ENCODE measurements at regions of chr1 and their contacts with region 1.

Region 1: DNA sequence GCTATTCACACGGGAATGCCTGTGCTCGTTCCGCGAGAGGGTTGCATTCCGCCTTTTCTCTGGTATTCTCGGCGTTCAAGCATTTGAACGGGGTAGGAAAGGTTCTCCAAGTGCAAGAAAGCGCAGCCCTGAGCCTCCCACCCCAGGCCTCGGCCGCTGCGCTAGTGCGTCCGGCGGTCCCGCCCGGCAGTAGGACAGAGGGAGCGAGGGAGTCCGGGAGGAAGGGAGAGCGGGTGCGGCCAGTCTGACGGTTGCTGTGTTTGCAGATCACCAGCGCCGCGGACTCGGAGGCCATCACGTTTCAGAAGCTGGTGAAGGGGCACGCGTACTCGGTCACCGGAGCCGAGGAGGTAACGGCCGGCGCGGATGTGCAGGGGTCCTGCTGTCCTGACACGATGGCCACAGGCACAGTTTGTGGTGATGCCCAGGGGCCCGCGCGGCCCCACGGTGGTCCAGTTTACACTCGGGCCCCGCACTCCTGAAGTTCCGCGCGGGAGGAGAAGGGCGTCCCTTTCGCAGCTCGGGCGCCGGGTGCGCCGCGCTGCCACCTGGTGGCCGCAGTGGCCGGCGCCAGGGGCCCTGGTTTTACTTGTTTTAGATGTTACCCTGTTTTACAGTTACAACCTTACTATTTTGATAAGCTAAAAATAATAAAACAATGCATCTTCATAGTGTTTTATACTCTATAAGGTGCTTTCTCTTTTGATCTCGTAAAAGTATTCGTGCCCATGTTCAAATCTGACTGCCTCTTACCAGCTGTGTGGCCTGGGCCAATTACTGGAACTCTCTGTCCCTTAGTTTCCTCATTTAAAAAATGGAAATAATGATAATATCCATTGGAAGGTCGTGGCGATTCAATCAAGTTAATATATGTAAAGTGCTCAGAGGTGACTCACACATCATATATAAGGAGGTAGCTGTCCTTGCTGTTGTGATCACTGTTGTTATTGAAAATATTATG is 36.7 kb downstream of the CAPN2 start:
- DNase-seq: peak; percentile 62
- H3K4me3 ChIP-seq: peak overlapping the region in 1 of 3 experiments; percentile 15
- H3K27ac ChIP-seq: peak overlapping the region; percentile 10
- H3K4me1 ChIP-seq: peaks cover 24% of the 10 kb centered on the region
- H3K27me3 ChIP-seq: no peaks in the 10 kb centered on the region
- CTCF ChIP-seq: peak; percentile 89 to 93
- POLR2A ChIP-seq: no peak

Region 2: DNA sequence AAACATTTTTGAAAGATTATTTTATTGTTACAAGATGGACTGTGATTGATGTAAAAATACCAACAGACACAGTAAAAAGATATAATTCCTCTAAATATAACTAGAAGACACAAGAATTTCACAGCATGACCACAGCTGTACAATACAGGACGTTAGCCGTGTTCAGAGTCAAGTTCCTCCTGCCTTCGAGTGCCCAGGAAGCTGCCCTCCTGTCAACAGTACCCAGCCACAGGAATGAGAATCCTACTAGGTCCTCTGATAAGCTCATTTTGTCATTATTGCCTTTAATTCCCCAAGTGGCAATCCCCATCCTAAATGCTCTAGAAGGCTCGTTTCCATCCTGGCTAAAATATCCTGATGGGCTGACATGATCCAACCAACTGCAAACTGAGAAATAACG is 53.1 kb before region 1 on chr1:
- CTCF ChIA-PET with region 1: interaction called, 118 read pairs
- POLR2A ChIA-PET with region 1: interaction called, 3 read pairs
- dilution Hi-C with region 1: no loop called
- intact Hi-C with region 1: loop called (anchors 1 kb)
- DNase-seq: no peak
- H3K4me3 ChIP-seq: no peak overlapping the region
- H3K27ac ChIP-seq: no peak overlapping the region
- H3K4me1 ChIP-seq: peaks cover 10% of the 10 kb centered on the region
- H3K27me3 ChIP-seq: no peaks in the 10 kb centered on the region
- CTCF ChIP-seq: no peak
- POLR2A ChIP-seq: no peak

Region 3: DNA sequence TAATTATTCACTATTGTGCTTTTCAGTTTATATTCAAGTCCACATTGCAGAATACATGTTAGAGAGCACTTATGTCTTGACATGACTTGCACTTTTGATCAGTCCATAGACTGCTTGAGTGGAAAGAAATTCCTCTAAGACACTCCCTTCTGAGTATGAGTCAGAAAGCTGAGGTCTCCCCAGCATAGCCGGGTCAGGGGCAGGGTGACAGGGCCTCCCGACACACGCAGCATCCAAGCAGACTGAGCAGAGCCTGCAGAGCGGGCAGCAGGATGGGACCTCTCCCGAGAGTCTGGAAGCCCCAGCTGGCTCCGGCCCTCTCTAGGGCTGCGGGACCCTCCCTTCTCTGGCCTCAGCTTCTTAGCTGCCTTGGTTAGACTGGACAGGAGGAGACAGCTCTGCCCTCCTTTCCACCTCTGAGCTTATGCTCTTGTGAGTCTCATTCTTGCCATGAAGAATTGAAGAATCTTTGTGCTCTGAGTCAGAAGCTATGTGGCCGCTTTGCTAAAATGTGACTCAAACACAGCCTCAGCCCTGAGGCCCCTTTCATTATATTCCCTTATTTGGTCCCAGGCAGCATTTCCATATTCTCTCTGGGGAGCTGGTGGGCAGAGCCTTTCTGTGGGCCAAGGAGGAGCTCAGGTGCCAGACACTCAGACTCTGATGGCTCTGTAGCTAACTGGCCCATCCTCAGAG is 48.0 kb before region 1 on chr1:
- CTCF ChIA-PET with region 1: interaction called, 148 read pairs
- POLR2A ChIA-PET with region 1: interaction called, 3 read pairs
- dilution Hi-C with region 1: no loop called
- intact Hi-C with region 1: loop called (anchors 1 kb)
- DNase-seq: peak; percentile 74
- H3K4me3 ChIP-seq: no peak overlapping the region
- H3K27ac ChIP-seq: peak overlapping the region; percentile 73
- H3K4me1 ChIP-seq: peaks cover 37% of the 10 kb centered on the region
- H3K27me3 ChIP-seq: no peaks in the 10 kb centered on the region
- CTCF ChIP-seq: no peak
- POLR2A ChIP-seq: peak; percentile 26

Region 4: GRCh38 chr1:223720928-223721591 is 28.0 kb before region 1 on chr1:
- CTCF ChIA-PET with region 1: interaction called, 16 read pairs
- POLR2A ChIA-PET with region 1: interaction called, 3 read pairs
- dilution Hi-C with region 1: no loop called
- intact Hi-C with region 1: no loop called
- DNase-seq: peak; percentile 24
- H3K4me3 ChIP-seq: no peak overlapping the region
- H3K27ac ChIP-seq: no peak overlapping the region
- H3K4me1 ChIP-seq: peaks cover 40% of the 10 kb centered on the region
- H3K27me3 ChIP-seq: no peaks in the 10 kb centered on the region
- CTCF ChIP-seq: no peak
- POLR2A ChIP-seq: no peak

Region 5: DNA sequence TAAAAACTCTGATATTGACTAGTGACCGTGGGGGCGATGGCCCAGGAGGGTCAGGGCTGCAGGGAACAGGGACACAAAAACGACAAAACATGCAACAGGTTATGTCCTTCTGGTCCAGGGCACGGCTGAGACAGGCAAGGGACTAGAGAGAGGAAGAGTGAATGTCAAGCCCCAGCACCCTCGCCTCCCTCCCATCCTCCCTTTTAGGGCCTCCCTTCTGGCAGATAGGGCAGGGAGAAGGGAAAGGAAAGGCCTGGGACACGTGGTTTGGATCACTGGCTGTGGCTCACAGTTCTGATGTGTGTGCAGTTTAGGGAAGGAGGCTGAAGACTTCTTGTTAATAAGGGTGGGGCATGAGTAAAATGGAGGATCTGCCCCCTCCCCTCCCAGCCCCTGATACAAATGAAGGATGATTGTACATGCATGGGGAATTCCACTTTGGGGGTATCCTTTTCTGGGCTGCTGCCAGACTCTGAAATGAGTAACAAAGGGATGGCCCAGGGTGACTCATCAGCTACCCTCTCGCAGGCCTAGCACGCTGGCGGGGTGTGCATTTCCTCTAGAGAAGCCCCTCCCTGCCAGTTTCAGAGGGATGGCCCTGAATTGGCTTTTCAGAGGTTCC is 22.6 kb before region 1 on chr1:
- CTCF ChIA-PET with region 1: interaction called, 68 read pairs
- POLR2A ChIA-PET with region 1: interaction called, 3 read pairs
- dilution Hi-C with region 1: no loop called
- intact Hi-C with region 1: loop called (anchors 2 kb)
- DNase-seq: peak; percentile 96
- H3K4me3 ChIP-seq: no peak overlapping the region
- H3K27ac ChIP-seq: peak overlapping the region; percentile 80
- H3K4me1 ChIP-seq: peaks cover 38% of the 10 kb centered on the region
- H3K27me3 ChIP-seq: no peaks in the 10 kb centered on the region
- CTCF ChIP-seq: no peak
- POLR2A ChIP-seq: no peak

Region 6: GRCh38 chr1:223771814-223772770 is 23.0 kb after region 1 on chr1:
- CTCF ChIA-PET with region 1: interaction called, 19 read pairs
- POLR2A ChIA-PET with region 1: no interaction called
- dilution Hi-C with region 1: no loop called
- intact Hi-C with region 1: no loop called
- DNase-seq: peak; percentile 95
- H3K4me3 ChIP-seq: peak overlapping the region in 1 of 3 experiments; percentile 2
- H3K27ac ChIP-seq: peak overlapping the region; percentile 78
- H3K4me1 ChIP-seq: peaks cover 68% of the 10 kb centered on the region
- H3K27me3 ChIP-seq: no peaks in the 10 kb centered on the region
- CTCF ChIP-seq: no peak
- POLR2A ChIP-seq: no peak

Region 7: GRCh38 chr1:223845810-223846682 is 97.0 kb after region 1 on chr1 and contains the start of gene TP53BP2:
- CTCF ChIA-PET with region 1: interaction called, 3 read pairs
- POLR2A ChIA-PET with region 1: no interaction called
- dilution Hi-C with region 1: no loop called
- intact Hi-C with region 1: loop called (anchors 1 kb)
- DNase-seq: peak; percentile 92
- H3K4me3 ChIP-seq: peak within 1 kb of the TSS; percentile 79 to 82 (median 81)
- H3K27ac ChIP-seq: peak within 1 kb of the TSS; percentile 99
- H3K4me1 ChIP-seq: peaks cover 18% of the 10 kb centered on the region
- H3K27me3 ChIP-seq: no peaks in the 10 kb centered on the region
- CTCF ChIP-seq: peak; percentile 58 to 84
- POLR2A ChIP-seq: peak; percentile 54
- total RNA-seq, gene TP53BP2: 43.2 and 51.9 TPM in 2 replicates

Measured in endothelial cell of umbilical vein (primary cell).